GM13977 (cell line): ENCODE measurements at regions of chr2 and their contacts with region 1.

Region 1: DNA sequence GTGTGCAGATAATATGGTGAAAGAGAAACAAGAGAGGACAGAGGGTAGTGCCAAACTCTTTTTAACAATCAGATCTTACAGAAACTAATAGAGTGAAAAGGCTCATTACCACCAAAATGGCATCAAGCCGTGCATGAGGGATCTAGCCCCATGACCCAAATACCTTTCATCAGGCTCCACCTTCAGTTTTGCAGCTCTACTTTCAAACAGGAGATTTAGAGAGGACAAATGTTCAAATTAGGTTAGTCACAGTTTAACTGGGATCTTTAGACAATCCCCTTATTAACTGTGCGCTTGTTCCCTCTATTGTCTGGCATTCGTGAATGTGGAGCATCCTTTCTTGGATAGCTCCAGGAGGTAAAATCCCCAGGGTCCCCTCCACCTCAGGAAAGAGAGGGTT is 1209.3 kb upstream of the CHAC2 start:
- DNase-seq: no peak
- CTCF ChIP-seq: no peak

Region 2: DNA sequence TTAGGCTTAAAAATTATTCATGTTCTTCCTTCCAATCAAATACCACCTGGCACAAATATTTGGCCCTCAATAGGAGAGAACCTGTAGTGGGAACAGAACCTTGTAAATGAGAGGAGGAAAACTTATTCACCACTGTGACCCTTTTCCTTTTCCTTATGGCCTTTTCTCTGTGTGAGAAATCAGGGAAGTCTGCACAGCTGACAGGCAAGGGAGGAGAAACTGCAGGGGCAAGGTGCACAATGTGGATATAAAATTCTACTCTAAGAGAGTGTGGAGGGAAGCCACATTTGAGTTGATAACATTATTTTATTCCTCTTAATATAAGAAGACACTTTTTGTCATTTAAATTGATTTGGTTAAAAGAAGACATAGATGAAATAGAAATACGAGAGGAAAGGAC is 37.6 kb before region 1 on chr2:
- in situ Hi-C with region 1: loop called (anchors 5 kb)
- DNase-seq: no peak
- CTCF ChIP-seq: no peak